CD4-positive, alpha-beta T cell (primary cell): ENCODE measurements at regions of chr9 and their contacts with region 1.

Region 1: DNA sequence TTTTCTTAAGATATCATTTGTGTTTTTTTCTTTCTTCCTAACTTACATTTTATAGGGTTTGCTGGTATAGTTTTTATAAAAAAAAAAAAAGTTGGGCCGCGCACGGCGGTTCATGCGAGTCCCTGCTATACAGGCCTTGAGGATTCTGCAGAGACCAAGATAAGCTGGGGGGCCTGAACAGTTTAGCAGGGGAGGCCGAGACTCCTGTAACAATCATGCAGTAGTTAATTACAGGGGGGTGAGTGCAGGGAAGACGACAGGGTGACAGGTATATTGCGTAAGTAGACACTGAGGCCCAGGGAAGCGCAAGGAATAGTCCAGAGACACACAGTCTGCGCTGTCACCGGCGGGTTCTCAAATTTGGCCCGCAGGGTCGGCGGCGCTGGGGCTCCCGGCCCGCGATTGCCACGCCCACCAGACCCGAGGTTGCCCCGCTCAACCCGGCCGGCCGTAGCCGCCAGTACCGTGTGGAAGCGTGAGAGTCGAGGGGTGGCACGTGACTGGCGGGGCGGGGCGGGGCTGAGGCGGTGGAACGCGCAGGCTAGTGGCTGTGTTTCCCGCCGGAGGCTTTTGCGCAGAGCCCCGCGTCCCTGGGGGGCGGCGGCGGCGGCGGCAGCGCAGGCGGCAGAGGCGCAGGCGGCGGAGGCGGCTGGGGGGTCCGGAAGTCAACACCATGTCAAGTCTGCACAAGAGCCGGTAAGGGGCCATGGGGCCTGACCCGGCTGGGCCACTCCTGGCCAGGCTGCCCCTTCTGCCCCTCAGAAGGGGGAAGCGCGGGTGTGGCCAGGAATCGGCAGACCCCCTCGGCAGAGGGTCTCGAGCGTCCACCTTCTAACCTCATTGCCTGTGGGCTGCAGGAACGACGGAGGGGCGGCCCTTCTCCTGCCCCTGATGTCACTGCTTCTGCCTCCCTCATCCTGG is at the start of gene TBC1D13:
- DNase-seq: peak; percentile 82 to 95 (median 87)
- ATAC-seq: peak; percentile 92
- H3K4me3 ChIP-seq: peak within 1 kb of the TSS; percentile 79
- H3K4me3 Mint-ChIP-seq: peak within 1 kb of the TSS; percentile 96
- H3K27ac ChIP-seq: peak within 1 kb of the TSS; percentile 67 to 77
- H3K27ac Mint-ChIP-seq: peak within 1 kb of the TSS; percentile 99
- H3K4me1 ChIP-seq: peaks cover 23% of the 10 kb centered on the region
- H3K4me1 Mint-ChIP-seq: peaks cover 25% of the 10 kb centered on the region
- H3K27me3 ChIP-seq: no peaks in the 10 kb centered on the region
- H3K27me3 Mint-ChIP-seq: no peaks in the 10 kb centered on the region
- CTCF ChIP-seq: no peak
- total RNA-seq, gene TBC1D13: 25.4 to 28.7 TPM

Region 2: GRCh38 chr9:128455849-128456612 is 330.9 kb before region 1 on chr9 and contains the start of gene ODF2:
- CTCF ChIA-PET with region 1: no interaction called
- POLR2A ChIA-PET with region 1: no interaction called
- intact Hi-C with region 1: loop called in 1 of 2 experiments (anchors 10 kb)
- DNase-seq: peak; percentile 97 to 99 (median 98)
- ATAC-seq: peak; percentile 90
- H3K4me3 ChIP-seq: peak within 1 kb of the TSS; percentile 91
- H3K4me3 Mint-ChIP-seq: peak within 1 kb of the TSS; percentile 91
- H3K27ac ChIP-seq: peak within 1 kb of the TSS; percentile 83 to 86
- H3K27ac Mint-ChIP-seq: peak within 1 kb of the TSS; percentile 89
- H3K4me1 ChIP-seq: peaks cover 19% of the 10 kb centered on the region
- H3K4me1 Mint-ChIP-seq: peaks cover 11% of the 10 kb centered on the region
- H3K27me3 ChIP-seq: no peaks in the 10 kb centered on the region
- H3K27me3 Mint-ChIP-seq: no peaks in the 10 kb centered on the region
- CTCF ChIP-seq: no peak
- total RNA-seq, gene ODF2: 18.3 to 21.3 TPM

Region 3: DNA sequence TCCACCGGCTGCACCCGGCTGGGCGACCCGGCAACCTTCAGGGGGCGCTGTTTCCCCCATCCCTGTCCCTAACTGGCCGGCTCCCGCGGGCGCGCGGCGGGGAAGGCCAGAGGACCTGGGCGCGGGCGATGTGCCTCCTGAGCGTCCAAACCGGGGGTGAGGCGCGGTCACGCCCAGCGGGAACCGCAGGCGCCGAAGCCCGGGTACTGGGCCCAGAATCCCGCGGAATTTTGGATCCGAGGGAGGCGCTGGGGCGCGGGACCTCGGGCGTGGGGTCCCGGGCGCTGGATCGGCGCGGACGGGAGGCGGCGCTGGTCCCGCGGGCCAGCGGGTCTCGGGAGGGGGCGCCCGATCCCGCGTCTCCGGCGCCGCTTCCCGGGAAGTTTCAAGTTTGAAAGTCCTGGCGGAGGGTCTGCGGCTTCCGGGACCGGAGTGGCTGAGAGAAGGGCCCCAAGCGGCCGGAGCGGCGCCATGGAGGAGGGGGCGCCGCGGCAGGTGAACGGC is 84.4 kb before region 1 on chr9 and contains the start of gene PKN3:
- CTCF ChIA-PET with region 1: no interaction called
- POLR2A ChIA-PET with region 1: no interaction called
- intact Hi-C with region 1: loop called in 1 of 2 experiments (anchors 5 kb)
- DNase-seq: peak; percentile 73 to 91 (median 83)
- ATAC-seq: peak; percentile 84
- H3K4me3 ChIP-seq: peak within 1 kb of the TSS; percentile 56
- H3K4me3 Mint-ChIP-seq: peak within 1 kb of the TSS; percentile 91
- H3K27ac ChIP-seq: no peak within 1 kb of the TSS
- H3K27ac Mint-ChIP-seq: peak within 1 kb of the TSS; percentile 24
- H3K4me1 ChIP-seq: peaks cover 20% of the 10 kb centered on the region
- H3K4me1 Mint-ChIP-seq: peaks cover 11% of the 10 kb centered on the region
- H3K27me3 ChIP-seq: no peaks in the 10 kb centered on the region
- H3K27me3 Mint-ChIP-seq: no peaks in the 10 kb centered on the region
- CTCF ChIP-seq: peak; percentile 92
- total RNA-seq, gene PKN3: 0.95 to 1.9 TPM

Region 4: DNA sequence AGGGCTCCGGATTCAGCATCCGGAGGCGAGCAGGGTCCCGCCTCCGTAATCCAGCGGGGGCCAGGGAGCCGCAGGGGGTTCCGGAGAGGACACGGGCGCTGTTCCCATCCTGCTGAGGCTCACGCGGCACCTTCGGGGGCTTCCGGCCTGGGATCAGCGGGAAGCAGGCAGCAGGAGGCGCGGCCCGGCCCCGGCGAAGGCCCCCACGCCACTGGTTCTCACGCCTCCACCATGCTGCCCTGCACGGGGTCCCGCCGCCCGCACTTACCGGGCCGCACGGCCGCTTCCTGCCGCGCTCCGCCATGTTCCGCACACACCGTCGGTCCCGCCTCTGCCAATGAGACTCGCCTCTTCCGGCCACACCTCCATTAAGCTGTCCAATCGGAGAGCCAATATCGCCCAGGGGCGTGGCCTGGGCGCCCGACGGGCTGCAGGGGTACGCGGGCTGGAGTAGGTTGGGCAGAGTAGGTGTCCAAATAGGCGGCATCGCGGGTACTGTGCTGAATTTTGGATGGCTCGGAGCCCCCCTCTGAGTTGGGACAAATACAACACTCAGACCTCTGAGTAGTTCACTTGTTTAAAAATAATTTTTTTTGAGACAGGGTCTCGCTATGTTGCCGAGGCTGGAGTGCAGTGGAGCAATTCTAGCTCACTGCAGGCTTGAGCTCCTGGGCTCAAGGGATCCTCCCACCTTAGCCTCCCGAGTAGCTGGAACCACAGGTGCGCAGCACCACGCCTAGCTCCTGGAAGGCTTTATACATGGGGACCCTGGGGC is 42.7 kb after region 1 on chr9 and contains the start of gene SPOUT1:
- CTCF ChIA-PET with region 1: no interaction called
- POLR2A ChIA-PET with region 1: interaction called, 3 read pairs
- intact Hi-C with region 1: loop called in 1 of 2 experiments (anchors 5 kb)
- DNase-seq: peak; percentile 84 to 96 (median 92)
- ATAC-seq: peak; percentile 98
- H3K4me3 ChIP-seq: peak within 1 kb of the TSS; percentile 94
- H3K4me3 Mint-ChIP-seq: peak within 1 kb of the TSS; percentile 99
- H3K27ac ChIP-seq: peak within 1 kb of the TSS; percentile 49 to 54
- H3K27ac Mint-ChIP-seq: peak within 1 kb of the TSS; percentile 87
- H3K4me1 ChIP-seq: peaks cover 21% of the 10 kb centered on the region
- H3K4me1 Mint-ChIP-seq: peaks cover 19% of the 10 kb centered on the region
- H3K27me3 ChIP-seq: no peaks in the 10 kb centered on the region
- H3K27me3 Mint-ChIP-seq: no peaks in the 10 kb centered on the region
- CTCF ChIP-seq: no peak
- total RNA-seq, gene SPOUT1: 22.2 to 27.6 TPM